A549 (cell line): ENCODE measurements at regions of chr1 and their contacts with region 1.

Region 1: DNA sequence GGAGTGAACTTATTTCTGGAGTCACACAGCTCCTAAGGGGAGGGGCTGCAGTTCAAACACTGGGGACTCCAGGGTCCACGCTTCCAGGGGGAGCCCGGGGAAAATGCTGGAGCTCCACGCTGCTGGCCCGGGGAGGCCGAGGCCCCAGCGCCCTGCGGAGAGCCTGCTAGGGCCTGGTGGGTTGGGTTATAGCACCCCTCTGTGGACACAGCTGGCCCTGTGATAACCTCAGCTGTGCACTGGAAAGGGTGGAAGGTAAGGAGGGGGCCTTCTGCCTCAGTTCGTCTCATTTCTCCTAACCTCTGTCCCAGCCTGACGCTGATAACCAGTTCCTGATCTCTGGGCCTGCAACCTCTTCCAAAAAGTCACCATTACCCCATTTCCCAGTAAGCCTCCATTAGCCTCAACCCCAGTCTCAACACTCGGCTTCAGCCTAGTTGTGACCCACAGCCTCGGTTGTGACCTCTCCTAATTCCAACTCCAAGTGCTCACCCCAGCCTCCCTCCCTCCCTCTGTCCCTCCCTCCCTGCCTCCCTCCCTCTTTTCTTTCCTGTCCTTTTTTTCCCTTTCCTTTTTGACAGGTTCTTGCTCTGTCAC is 7.1 kb downstream of the NBL1 start:
- DNase-seq: peak; percentile 46 to 77
- ATAC-seq: peak; percentile 89 to 90
- H3K4me3 ChIP-seq: no peak overlapping the region
- H3K27ac ChIP-seq: 0 out of 6 replicates have a peak overlapping the region, but pooled peaks of 1 of the 2 experiments have one; percentile 7
- H3K4me1 ChIP-seq: peaks cover 22% of the 10 kb centered on the region
- CTCF ChIP-seq: peak; percentile 65
- EP300 ChIP-seq: no peak
- POLR2A ChIP-seq: no peak
- RAD21 ChIP-seq: peak; percentile 82 to 83

Region 2: DNA sequence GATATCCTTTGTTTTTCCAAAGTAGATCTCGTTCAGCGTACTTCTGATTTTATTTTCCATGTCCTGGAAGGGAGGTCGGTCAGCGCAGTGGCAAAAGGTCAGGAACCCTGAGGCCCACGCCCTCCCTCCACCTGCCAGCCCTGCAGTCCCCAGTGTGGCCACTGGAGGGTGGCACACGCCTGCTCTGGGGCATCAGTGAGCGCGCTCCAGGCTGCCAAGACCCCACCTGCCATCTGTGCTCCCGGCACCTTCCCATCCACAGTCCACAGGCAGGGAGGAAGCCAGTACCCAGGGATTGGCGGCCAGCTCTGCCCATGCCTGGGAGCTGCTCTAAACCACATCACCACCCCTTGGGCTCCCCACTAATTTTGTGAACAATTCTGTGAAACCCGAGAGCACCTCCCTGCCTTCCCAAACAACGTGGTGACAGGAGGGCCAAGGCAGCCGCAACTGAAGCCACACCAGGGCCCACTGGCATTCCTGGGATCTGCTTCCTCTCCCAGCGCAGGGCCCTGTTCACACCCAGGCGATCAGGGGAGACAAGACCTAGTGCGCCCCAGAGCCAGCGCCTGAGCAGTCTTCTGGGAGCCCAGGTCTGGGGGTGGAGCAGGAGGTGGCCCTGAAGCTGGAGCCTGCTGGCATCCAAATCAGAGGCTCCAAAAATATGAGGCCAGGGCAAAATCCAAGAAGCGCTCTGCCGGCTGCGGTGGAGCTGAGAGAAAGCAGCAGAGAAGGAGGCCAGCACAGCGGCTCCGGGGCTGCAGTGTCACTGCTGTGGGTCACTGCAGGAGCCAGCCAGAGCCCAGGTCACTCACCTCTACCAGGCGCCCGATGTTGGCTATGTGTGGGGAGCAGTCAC is 306.6 kb before region 1 on chr1:
- CTCF ChIA-PET with region 1: interaction called, 30 read pairs
- POLR2A ChIA-PET with region 1: no interaction called
- DNase-seq: peak; percentile 31 to 44
- ATAC-seq: peak; percentile 82 to 86
- H3K4me3 ChIP-seq: no peak overlapping the region
- H3K27ac ChIP-seq: no peak overlapping the region
- H3K4me1 ChIP-seq: no peaks in the 10 kb centered on the region
- CTCF ChIP-seq: peak; percentile 57
- EP300 ChIP-seq: no peak
- POLR2A ChIP-seq: no peak
- RAD21 ChIP-seq: peak; percentile 71 to 73

Region 3: DNA sequence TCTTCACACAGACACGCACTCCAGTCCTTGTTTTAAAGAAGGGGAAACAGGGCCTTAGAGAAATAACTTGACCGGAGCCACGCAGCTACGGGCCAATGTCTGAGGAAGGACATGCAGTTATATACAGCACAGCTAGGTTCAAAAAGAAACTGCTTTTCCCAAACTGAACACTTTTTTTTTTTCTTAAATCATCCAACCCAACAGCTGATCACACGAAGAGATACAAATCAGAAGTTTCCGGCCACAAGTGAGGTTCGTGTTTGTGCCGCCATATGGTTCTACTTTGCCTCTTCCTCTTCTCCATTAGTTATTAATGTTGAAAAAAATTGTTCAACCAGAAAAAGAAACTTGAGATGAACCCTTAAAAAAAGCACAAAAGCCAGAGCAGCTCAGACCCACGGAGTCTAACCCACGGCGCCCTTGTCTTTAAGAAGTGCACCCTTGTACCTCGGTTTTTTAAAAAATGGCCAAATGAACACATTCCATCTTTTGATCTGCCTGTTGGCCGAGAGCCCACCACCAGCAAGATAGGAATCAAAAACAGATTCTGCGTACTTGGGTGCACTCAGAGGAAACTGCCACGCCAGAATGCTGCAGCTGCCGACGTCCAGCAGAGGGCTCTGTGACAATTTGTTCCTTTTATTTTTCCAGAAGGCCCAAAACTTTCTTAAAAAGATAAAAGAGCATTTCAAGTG is 260.2 kb before region 1 on chr1:
- CTCF ChIA-PET with region 1: interaction called, 15 read pairs
- POLR2A ChIA-PET with region 1: no interaction called
- DNase-seq: peak; percentile 12 to 18
- ATAC-seq: peak in 1 of 2 experiments; percentile 61; a peak in 3 of 6 replicates
- H3K4me3 ChIP-seq: no peak overlapping the region
- H3K27ac ChIP-seq: no peak overlapping the region
- H3K4me1 ChIP-seq: no peaks in the 10 kb centered on the region; the same call in 2 of the 3 replicates
- CTCF ChIP-seq: peak; percentile 59
- EP300 ChIP-seq: no peak
- POLR2A ChIP-seq: no peak
- RAD21 ChIP-seq: peak; percentile 57 to 59

Region 4: GRCh38 chr1:19485362-19486187 is 165.7 kb before region 1 on chr1 and contains the start of gene CAPZB:
- CTCF ChIA-PET with region 1: interaction called, 16 read pairs
- POLR2A ChIA-PET with region 1: interaction called, 3 read pairs
- DNase-seq: peak; percentile 81 to 83
- ATAC-seq: peak; percentile 86 to 92
- H3K4me3 ChIP-seq: peak within 1 kb of the TSS; percentile 94
- H3K27ac ChIP-seq: peak within 1 kb of the TSS; percentile 98 to 100
- H3K4me1 ChIP-seq: peaks cover 34% of the 10 kb centered on the region
- CTCF ChIP-seq: no peak
- EP300 ChIP-seq: no peak
- POLR2A ChIP-seq: peak; percentile 77
- RAD21 ChIP-seq: no peak
- polyA plus RNA-seq, gene CAPZB: 129 and 133 TPM in 2 replicates

Region 5: DNA sequence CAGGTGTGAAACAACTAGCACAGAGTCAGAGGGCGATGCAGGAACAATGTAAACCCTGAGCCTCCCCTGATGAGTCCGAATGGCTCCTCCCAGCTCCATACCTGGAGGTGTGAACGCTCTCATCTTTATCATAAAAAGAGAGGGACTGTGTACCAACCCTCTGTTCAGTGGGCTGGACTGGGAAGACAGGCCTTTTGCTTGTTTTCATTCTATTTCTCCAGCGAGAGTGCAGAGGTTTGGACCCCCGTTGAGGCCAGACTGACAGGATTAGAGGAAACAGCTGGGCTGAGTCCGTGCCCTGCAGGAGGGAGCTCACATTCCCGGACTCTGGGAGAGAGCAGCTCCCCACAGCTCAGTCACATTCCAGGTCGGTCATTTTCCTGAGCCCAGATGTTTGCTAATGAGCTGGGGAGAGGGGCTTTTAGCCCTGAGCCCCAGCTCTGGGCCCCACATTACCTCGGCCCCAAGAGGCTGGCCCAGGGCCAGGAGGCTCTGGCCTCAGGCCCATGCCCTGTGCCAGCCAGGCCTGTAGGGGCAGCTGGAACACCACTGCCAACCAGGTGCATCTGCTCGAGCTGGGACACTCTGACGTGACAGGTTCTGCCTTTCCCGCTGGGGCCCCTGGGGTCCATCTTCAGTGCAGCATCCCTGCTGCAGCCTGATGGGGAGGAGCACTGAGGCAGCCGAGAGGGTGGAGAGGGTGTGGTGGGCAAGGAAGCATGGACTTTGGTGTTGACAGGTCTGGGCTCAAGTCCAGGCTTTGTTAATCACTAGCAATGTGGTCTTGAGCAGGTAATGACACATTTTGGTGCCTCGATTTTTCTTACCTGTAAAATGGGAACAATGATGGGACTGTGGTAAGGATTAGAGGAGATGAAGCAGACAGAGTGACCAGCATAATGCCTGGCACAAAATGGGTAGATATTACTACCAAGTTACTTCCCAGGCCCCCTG is 10.6 kb before region 1 on chr1:
- CTCF ChIA-PET with region 1: interaction called, 20 read pairs
- POLR2A ChIA-PET with region 1: no interaction called
- DNase-seq: peak; percentile 41 to 60
- ATAC-seq: peak; percentile 45 to 54; a peak in 5 of 6 replicates
- H3K4me3 ChIP-seq: no peak overlapping the region
- H3K27ac ChIP-seq: peak overlapping the region; percentile 66 to 72; a peak in 4 of 6 replicates
- H3K4me1 ChIP-seq: peaks cover 51% of the 10 kb centered on the region
- CTCF ChIP-seq: no peak
- EP300 ChIP-seq: no peak
- POLR2A ChIP-seq: no peak
- RAD21 ChIP-seq: no peak

Region 6: DNA sequence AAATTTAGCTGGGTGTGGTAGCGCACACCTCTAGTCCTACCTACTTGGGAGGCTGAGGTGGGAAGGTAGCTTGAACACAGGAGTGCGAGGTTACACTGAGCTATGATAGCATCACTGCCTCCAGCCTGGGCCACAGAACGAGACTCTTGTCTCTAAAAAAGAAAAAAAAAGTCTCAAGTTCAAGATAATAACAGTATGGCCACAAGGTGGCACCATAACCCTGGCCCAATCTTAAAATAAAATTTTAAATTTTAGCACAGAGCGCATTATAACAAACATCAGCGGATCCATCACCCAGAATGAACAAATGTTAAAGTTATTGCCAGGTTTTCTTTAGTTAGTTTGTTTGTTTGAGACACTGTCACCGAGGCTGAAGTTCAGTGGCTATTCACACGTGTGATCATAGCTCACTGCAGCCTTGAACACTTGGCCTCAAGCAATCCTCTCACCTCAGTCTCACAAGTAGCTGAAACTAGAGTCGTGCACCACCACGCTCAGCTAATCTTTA is 10.5 kb after region 1 on chr1:
- CTCF ChIA-PET with region 1: interaction called, 45 read pairs
- POLR2A ChIA-PET with region 1: interaction called, 3 read pairs
- DNase-seq: peak in 1 of 2 experiments; percentile 35
- ATAC-seq: no peak
- H3K4me3 ChIP-seq: no peak overlapping the region
- H3K27ac ChIP-seq: no peak overlapping the region
- H3K4me1 ChIP-seq: peaks cover 7% of the 10 kb centered on the region; the same call in 1 of the 3 replicates
- CTCF ChIP-seq: peak; percentile 76
- EP300 ChIP-seq: no peak
- POLR2A ChIP-seq: no peak
- RAD21 ChIP-seq: peak; percentile 62 to 64

Region 7: DNA sequence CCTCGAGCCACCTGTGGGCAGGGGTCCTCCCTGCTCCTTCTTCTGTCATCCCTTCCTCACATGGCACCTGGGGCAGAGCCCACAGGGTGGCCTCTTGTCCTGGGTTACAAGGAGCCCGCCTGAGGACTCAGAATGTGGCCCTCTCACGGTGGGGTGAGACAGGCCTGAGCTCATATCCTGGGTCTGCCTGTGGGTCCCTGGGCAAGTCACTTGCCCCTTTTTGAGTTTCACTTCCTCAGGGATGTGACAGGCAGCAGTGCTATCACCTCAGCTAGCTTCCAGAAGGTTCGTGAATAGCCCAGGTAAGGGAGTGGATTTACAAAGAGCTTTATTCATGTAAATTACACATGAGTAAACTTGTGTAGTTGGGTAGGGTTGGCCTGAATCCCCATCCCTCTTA is 46.9 kb after region 1 on chr1:
- CTCF ChIA-PET with region 1: no interaction called
- POLR2A ChIA-PET with region 1: no interaction called
- DNase-seq: no peak
- ATAC-seq: no peak
- H3K4me3 ChIP-seq: no peak overlapping the region
- H3K27ac ChIP-seq: no peak overlapping the region
- H3K4me1 ChIP-seq: no peaks in the 10 kb centered on the region
- CTCF ChIP-seq: no peak
- EP300 ChIP-seq: no peak
- POLR2A ChIP-seq: no peak
- RAD21 ChIP-seq: no peak